ENCODE measurements at regions of chr3 and their contacts with region 1.

Region 1: GRCh38 chr3:43162230-43163084 is 56.6 kb upstream of the POMGNT2 start:
- DNase-seq: peak; percentile 79
- ATAC-seq: peak; percentile 93
- H3K4me3 Mint-ChIP-seq: peak overlapping the region; percentile 72
- H3K27ac Mint-ChIP-seq: peak overlapping the region; percentile 99
- H3K4me1 Mint-ChIP-seq: peaks cover 29% of the 10 kb centered on the region
- H3K27me3 Mint-ChIP-seq: no peaks in the 10 kb centered on the region

Region 2: GRCh38 chr3:43148033-43148432 is 14.4 kb before region 1 on chr3:
- CTCF ChIA-PET with region 1: interaction called, 13 read pairs
- POLR2A ChIA-PET with region 1: no interaction called
- DNase-seq: no peak
- ATAC-seq: no peak
- H3K4me3 Mint-ChIP-seq: no peak overlapping the region
- H3K27ac Mint-ChIP-seq: no peak overlapping the region
- H3K4me1 Mint-ChIP-seq: no peaks in the 10 kb centered on the region
- H3K27me3 Mint-ChIP-seq: peaks cover 3% of the 10 kb centered on the region

Region 3: DNA sequence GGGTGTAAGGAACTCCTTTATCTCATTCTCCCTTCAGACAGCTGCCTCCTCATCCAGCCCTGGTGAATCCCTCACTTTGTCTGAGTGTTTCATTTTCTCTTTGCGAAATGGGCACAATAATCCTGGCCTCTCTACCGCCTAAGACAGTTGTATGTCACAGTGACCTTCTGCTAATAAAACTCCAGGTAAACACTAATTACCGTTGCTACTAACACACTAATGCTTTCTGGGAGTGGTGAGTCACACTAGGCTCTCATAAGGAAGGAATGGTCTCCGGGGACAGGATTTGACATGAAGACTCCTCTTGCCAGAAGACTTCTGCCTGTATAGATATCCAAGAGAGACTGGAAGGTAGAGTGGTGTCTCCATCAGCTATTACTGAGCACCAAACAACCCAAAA is 52.2 kb after region 1 on chr3:
- CTCF ChIA-PET with region 1: interaction called, 19 read pairs
- POLR2A ChIA-PET with region 1: no interaction called
- DNase-seq: no peak
- ATAC-seq: no peak
- H3K4me3 Mint-ChIP-seq: no peak overlapping the region
- H3K27ac Mint-ChIP-seq: no peak overlapping the region
- H3K4me1 Mint-ChIP-seq: peaks cover 16% of the 10 kb centered on the region
- H3K27me3 Mint-ChIP-seq: no peaks in the 10 kb centered on the region

Region 4: GRCh38 chr3:43273416-43273815 is 111.0 kb after region 1 on chr3:
- CTCF ChIA-PET with region 1: interaction called, 10 read pairs
- POLR2A ChIA-PET with region 1: no interaction called
- DNase-seq: no peak
- ATAC-seq: no peak
- H3K4me3 Mint-ChIP-seq: no peak overlapping the region
- H3K27ac Mint-ChIP-seq: no peak overlapping the region
- H3K4me1 Mint-ChIP-seq: peaks cover 10% of the 10 kb centered on the region
- H3K27me3 Mint-ChIP-seq: no peaks in the 10 kb centered on the region

Region 5: DNA sequence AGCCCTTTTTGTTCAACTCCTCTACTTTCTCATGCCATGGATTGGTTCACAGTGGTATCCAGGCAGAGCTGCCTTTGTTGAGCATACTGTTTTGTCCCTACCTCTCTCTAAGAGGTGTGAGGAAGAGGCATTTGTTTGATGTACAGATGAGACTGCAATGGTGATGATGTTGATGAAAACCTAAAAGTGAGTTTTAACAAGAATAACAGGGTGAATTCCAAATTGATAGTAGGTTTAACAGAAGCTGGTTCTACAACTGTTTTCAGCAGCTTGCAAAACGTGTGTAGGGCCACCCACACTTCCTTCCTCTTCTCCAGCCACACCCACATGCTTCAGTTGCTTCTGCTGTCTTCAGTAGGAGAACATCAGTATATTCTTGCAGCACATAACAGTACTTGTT is 134.1 kb after region 1 on chr3:
- CTCF ChIA-PET with region 1: interaction called, 24 read pairs
- POLR2A ChIA-PET with region 1: interaction called, 3 read pairs
- DNase-seq: peak; percentile 80
- ATAC-seq: peak; percentile 94
- H3K4me3 Mint-ChIP-seq: peak overlapping the region; percentile 79
- H3K27ac Mint-ChIP-seq: peak overlapping the region; percentile 92
- H3K4me1 Mint-ChIP-seq: peaks cover 78% of the 10 kb centered on the region
- H3K27me3 Mint-ChIP-seq: no peaks in the 10 kb centered on the region

Region 6: GRCh38 chr3:43378066-43378935 is 215.8 kb after region 1 on chr3:
- CTCF ChIA-PET with region 1: interaction called, 47 read pairs
- POLR2A ChIA-PET with region 1: no interaction called
- DNase-seq: peak; percentile 83
- ATAC-seq: peak; percentile 96
- H3K4me3 Mint-ChIP-seq: no peak overlapping the region
- H3K27ac Mint-ChIP-seq: peak overlapping the region; percentile 65
- H3K4me1 Mint-ChIP-seq: peaks cover 16% of the 10 kb centered on the region
- H3K27me3 Mint-ChIP-seq: no peaks in the 10 kb centered on the region

Region 7: DNA sequence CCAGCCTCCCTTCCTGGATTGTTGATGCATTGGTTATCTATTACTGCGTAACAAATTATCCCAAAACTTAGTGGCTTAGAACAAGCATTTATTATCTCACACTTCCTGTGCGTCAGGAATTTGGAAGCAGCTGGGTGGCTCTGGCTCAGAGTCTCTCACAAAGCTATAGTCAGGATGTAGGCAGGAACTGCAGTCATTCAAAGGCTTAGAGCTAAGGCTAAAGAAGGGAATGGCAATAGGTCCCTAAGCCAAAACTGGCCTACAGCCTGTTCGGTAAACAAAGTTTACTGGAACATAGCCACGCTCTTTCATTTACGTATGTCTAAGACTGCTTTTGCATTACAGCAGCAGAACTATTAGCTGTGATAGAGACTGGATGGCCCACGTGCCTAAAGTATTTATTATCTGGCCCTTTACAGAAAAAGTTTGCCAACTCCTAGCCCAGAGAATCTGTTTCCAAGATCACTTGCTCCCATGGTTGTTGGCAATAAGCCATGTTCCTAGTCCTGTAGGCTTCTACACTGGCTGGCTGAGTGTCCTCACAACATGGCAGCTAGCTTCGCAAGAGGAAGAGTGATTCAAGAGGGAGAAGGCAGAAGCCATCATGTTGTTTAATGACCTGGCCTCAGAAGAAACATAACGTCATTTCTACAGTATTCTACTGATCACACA is 256.3 kb after region 1 on chr3:
- CTCF ChIA-PET with region 1: no interaction called
- POLR2A ChIA-PET with region 1: no interaction called
- DNase-seq: no peak
- ATAC-seq: no peak
- H3K4me3 Mint-ChIP-seq: no peak overlapping the region
- H3K27ac Mint-ChIP-seq: no peak overlapping the region
- H3K4me1 Mint-ChIP-seq: no peaks in the 10 kb centered on the region
- H3K27me3 Mint-ChIP-seq: no peaks in the 10 kb centered on the region

Region 8: DNA sequence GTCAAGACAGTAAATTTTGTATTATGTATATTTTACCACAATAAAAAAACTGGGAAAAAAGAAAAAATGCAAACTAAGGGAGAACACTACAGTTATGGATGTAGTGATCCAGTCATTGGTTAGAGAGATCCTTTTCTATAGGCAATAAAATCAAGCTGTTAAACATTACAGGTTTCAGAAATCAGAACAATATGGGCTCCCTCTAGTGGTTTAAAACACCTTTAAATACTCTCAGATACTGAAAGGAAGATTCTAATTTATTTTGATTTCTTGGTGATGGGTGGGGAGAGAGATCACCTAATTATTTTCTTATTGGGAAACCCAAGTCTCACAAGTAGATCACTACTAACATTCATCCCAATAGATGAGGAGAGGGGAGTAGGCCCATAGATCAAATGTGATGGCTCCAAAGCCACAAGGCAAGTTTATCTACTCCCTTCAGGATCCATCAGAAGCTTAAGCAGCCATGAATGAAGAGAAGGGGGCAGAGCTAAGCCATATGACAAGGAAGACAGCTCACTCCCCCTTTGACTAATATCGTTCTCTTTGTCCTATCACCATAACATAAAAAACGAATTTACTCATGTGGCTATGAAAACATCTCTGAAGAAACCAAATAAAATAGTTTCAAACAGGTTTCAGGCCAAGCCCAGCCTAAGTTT is 340.7 kb after region 1 on chr3:
- CTCF ChIA-PET with region 1: interaction called, 63 read pairs
- POLR2A ChIA-PET with region 1: no interaction called
- DNase-seq: no peak
- ATAC-seq: peak; percentile 65
- H3K4me3 Mint-ChIP-seq: no peak overlapping the region
- H3K27ac Mint-ChIP-seq: no peak overlapping the region
- H3K4me1 Mint-ChIP-seq: peaks cover 34% of the 10 kb centered on the region
- H3K27me3 Mint-ChIP-seq: no peaks in the 10 kb centered on the region

Measured in activated CD8-positive, alpha-beta T cell treated with anti-CD3 and anti-CD28 coated beads, Interleukin-2, amount 10 ng/mL, durations not matched to agents 7 days and 5 days (primary cell).